ENCODE measurements at regions of chr1 and their contacts with region 1.

Region 1: DNA sequence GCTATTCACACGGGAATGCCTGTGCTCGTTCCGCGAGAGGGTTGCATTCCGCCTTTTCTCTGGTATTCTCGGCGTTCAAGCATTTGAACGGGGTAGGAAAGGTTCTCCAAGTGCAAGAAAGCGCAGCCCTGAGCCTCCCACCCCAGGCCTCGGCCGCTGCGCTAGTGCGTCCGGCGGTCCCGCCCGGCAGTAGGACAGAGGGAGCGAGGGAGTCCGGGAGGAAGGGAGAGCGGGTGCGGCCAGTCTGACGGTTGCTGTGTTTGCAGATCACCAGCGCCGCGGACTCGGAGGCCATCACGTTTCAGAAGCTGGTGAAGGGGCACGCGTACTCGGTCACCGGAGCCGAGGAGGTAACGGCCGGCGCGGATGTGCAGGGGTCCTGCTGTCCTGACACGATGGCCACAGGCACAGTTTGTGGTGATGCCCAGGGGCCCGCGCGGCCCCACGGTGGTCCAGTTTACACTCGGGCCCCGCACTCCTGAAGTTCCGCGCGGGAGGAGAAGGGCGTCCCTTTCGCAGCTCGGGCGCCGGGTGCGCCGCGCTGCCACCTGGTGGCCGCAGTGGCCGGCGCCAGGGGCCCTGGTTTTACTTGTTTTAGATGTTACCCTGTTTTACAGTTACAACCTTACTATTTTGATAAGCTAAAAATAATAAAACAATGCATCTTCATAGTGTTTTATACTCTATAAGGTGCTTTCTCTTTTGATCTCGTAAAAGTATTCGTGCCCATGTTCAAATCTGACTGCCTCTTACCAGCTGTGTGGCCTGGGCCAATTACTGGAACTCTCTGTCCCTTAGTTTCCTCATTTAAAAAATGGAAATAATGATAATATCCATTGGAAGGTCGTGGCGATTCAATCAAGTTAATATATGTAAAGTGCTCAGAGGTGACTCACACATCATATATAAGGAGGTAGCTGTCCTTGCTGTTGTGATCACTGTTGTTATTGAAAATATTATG is 36.7 kb downstream of the CAPN2 start:
- DNase-seq: peak; percentile 67
- H3K4me3 Mint-ChIP-seq: peak overlapping the region; percentile 55
- H3K27ac Mint-ChIP-seq: peak overlapping the region; percentile 31
- H3K4me1 Mint-ChIP-seq: peaks cover 31% of the 10 kb centered on the region
- H3K27me3 Mint-ChIP-seq: no peaks in the 10 kb centered on the region

Region 2: DNA sequence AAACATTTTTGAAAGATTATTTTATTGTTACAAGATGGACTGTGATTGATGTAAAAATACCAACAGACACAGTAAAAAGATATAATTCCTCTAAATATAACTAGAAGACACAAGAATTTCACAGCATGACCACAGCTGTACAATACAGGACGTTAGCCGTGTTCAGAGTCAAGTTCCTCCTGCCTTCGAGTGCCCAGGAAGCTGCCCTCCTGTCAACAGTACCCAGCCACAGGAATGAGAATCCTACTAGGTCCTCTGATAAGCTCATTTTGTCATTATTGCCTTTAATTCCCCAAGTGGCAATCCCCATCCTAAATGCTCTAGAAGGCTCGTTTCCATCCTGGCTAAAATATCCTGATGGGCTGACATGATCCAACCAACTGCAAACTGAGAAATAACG is 53.1 kb before region 1 on chr1:
- CTCF ChIA-PET with region 1: interaction called, 56 read pairs
- POLR2A ChIA-PET with region 1: interaction called, 9 read pairs
- DNase-seq: no peak
- H3K4me3 Mint-ChIP-seq: no peak overlapping the region
- H3K27ac Mint-ChIP-seq: no peak overlapping the region
- H3K4me1 Mint-ChIP-seq: peaks cover 15% of the 10 kb centered on the region
- H3K27me3 Mint-ChIP-seq: peaks cover 2% of the 10 kb centered on the region

Region 3: DNA sequence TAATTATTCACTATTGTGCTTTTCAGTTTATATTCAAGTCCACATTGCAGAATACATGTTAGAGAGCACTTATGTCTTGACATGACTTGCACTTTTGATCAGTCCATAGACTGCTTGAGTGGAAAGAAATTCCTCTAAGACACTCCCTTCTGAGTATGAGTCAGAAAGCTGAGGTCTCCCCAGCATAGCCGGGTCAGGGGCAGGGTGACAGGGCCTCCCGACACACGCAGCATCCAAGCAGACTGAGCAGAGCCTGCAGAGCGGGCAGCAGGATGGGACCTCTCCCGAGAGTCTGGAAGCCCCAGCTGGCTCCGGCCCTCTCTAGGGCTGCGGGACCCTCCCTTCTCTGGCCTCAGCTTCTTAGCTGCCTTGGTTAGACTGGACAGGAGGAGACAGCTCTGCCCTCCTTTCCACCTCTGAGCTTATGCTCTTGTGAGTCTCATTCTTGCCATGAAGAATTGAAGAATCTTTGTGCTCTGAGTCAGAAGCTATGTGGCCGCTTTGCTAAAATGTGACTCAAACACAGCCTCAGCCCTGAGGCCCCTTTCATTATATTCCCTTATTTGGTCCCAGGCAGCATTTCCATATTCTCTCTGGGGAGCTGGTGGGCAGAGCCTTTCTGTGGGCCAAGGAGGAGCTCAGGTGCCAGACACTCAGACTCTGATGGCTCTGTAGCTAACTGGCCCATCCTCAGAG is 48.0 kb before region 1 on chr1:
- CTCF ChIA-PET with region 1: interaction called, 56 read pairs
- POLR2A ChIA-PET with region 1: interaction called, 9 read pairs
- DNase-seq: no peak
- H3K4me3 Mint-ChIP-seq: no peak overlapping the region
- H3K27ac Mint-ChIP-seq: no peak overlapping the region
- H3K4me1 Mint-ChIP-seq: peaks cover 27% of the 10 kb centered on the region
- H3K27me3 Mint-ChIP-seq: no peaks in the 10 kb centered on the region

Region 4: DNA sequence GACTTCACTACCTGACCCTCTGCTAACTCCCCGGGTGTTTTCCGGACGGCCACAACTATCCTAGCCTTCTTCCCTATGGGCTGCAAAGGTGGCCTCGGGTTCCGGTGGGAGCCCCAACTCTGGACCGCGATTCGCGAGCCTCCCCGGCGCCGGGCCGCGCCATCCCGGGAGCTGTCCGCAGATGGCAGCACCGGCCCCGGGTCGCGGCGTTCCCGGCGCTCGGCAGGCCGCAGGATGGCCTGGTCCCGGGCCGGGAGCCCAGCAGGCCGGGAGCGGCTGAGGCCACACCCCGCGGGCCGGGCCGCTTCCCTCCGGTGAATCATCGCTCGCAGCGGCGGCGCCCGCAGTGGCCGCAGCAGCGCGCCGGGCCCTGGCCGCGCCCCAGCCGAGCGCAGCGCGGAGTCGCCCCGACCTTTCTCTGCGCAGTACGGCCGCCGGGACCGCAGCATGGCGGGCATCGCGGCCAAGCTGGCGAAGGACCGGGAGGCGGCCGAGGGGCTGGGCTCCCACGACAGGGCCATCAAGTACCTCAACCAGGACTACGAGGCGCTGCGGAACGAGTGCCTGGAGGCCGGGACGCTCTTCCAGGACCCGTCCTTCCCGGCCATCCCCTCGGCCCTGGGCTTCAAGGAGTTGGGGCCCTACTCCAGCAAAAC is 36.7 kb before region 1 on chr1 and contains the start of gene CAPN2:
- CTCF ChIA-PET with region 1: interaction called, 53 read pairs
- POLR2A ChIA-PET with region 1: interaction called, 35 read pairs
- DNase-seq: peak; percentile 75
- H3K4me3 Mint-ChIP-seq: peak within 1 kb of the TSS; percentile 85
- H3K27ac Mint-ChIP-seq: peak within 1 kb of the TSS; percentile 95
- H3K4me1 Mint-ChIP-seq: peaks cover 57% of the 10 kb centered on the region
- H3K27me3 Mint-ChIP-seq: peaks cover 6% of the 10 kb centered on the region
- total RNA-seq, gene CAPN2: 263 TPM

Region 5: GRCh38 chr1:223726380-223727001 is 22.6 kb before region 1 on chr1:
- CTCF ChIA-PET with region 1: interaction called, 39 read pairs
- POLR2A ChIA-PET with region 1: interaction called, 9 read pairs
- DNase-seq: peak; percentile 88
- H3K4me3 Mint-ChIP-seq: peak overlapping the region; percentile 69
- H3K27ac Mint-ChIP-seq: peak overlapping the region; percentile 89
- H3K4me1 Mint-ChIP-seq: peaks cover 81% of the 10 kb centered on the region
- H3K27me3 Mint-ChIP-seq: no peaks in the 10 kb centered on the region

Region 6: DNA sequence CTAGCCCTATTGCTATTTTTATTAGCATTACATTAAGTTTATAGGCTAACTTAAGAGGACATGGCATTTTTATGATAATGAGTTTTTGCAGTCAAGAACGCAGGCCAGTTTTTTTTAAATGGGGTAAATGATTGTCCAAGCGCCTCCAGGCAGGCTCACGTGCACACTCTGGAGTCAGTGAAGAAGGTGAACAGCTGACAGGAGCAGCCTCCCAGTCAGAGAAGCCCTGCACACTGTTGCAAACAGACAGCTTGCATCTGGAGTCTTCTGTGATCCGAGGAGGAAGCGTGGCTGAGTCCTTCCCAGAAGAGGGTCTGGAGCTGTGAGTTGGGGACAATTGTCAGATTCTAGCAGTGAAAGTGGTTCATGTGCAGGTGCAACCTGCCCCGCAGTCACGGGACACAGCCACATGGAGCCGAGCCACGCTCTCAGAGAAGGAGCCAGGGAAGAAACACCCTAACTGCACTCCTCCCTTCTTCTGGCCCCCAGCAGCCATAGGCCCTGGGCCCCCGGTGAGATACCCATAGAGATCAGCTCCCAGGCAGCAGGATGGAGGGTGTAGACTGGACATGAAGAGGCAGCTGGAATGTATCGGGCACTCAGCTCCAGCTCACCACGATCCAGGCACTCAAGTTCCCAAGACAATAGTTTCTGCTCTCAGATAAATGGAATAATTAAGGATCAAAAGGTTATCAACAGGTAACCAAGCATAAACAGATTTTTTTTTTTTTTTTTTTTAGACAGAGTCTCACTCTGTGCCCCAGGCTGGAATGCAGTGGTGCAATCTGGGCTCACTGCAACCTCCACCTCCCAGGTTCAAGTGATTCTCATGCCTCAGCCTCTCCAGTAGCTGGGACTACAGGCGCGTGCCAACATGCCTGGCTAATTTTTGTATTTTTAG is 10.3 kb before region 1 on chr1:
- CTCF ChIA-PET with region 1: interaction called, 14 read pairs
- POLR2A ChIA-PET with region 1: interaction called, 4 read pairs
- DNase-seq: no peak
- H3K4me3 Mint-ChIP-seq: no peak overlapping the region
- H3K27ac Mint-ChIP-seq: no peak overlapping the region
- H3K4me1 Mint-ChIP-seq: peaks cover 14% of the 10 kb centered on the region
- H3K27me3 Mint-ChIP-seq: no peaks in the 10 kb centered on the region

Region 7: DNA sequence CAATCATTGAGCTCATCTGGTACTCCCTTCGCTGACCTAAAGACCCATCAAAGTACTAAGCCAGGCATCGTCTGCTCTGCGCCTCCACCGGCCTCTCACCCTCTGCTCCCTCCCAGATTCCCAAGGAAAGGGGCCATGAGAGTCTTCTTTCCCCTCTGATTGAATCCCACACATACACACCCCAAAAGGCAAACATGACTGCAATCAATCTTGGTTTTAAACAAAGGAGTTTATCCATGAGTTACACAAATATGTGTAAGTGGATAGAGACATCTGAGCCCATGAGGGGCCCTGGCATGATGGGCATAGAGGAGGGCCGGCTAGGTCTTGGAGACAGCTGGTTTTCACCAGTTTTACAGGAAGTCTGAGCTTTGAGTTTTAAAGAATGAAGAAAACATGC is 14.2 kb after region 1 on chr1:
- CTCF ChIA-PET with region 1: interaction called, 14 read pairs
- POLR2A ChIA-PET with region 1: interaction called, 5 read pairs
- DNase-seq: no peak
- H3K4me3 Mint-ChIP-seq: no peak overlapping the region
- H3K27ac Mint-ChIP-seq: peak overlapping the region; percentile 37
- H3K4me1 Mint-ChIP-seq: no peaks in the 10 kb centered on the region
- H3K27me3 Mint-ChIP-seq: no peaks in the 10 kb centered on the region

Region 8: GRCh38 chr1:223887747-223888418 is 138.8 kb after region 1 on chr1:
- CTCF ChIA-PET with region 1: no interaction called
- POLR2A ChIA-PET with region 1: no interaction called
- DNase-seq: no peak
- H3K4me3 Mint-ChIP-seq: no peak overlapping the region
- H3K27ac Mint-ChIP-seq: no peak overlapping the region
- H3K4me1 Mint-ChIP-seq: no peaks in the 10 kb centered on the region
- H3K27me3 Mint-ChIP-seq: no peaks in the 10 kb centered on the region

Measured in activated CD4-positive, alpha-beta memory T cell treated with anti-CD3 and anti-CD28 coated beads, Interleukin-2, amount 10 ng/mL, durations not matched to agents 7 days and 5 days (primary cell).